ENCODE measurements at regions of chr7 and their contacts with region 1.

Region 1: DNA sequence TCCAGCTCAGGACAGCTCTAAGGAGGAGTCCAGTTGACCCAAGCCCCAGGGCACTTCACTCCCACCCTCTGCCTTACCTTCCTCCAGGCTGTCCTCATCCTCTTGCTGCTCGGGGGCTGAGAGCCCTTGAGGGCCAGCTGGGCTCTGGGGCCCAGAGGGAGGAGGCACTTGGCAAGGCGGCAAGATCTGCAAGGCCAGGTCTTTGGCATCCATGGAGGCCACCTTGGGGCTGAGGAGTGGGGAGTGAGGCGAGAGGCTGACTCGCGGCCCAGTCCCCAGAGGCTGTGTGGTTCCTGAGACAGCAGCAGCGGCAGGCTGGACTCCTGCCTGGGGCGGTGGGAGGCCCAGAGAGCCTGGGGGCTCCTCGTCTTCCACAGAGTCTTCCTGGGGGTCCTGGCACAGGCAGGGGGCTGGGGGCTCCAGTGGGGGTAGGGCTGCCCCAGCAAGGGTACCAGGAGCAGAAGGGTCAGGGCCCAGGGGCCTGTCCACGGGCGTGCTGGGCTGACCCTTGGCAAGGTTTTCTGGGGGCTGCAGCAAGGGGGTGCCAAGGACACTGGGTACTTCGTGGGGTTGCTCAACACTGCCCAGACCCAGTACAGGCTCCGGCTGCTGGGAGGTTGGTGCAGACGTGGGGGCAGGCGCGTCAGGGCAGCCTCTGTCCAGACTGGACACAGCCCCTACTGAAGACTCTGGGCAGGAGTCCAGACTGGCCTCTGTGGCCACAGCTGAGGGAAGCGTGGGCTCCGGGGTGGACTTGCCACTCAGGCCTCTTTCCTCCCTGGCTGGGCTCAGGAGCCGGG is 6.5 kb downstream of the NACAD start:
- DNase-seq: peak; percentile 44 to 74 (median 59)
- H3K4me3 ChIP-seq: no peak overlapping the region
- H3K27ac ChIP-seq: peak overlapping the region in 1 of 5 donors; percentile 22
- H3K4me1 ChIP-seq: peaks cover 0 to 12% of the 10 kb centered on the region in 2 donors
- H3K27me3 ChIP-seq: no peaks in the 10 kb centered on the region
- CTCF ChIP-seq: no peak
- POLR2A ChIP-seq: no peak

Region 2: GRCh38 chr7:45122975-45123860 is 41.0 kb after region 1 on chr7:
- intact Hi-C with region 1: loop called in 1 of 2 experiments (anchors 1 kb)
- DNase-seq: no peak
- H3K4me3 ChIP-seq: no peak overlapping the region
- H3K27ac ChIP-seq: no peak overlapping the region
- H3K4me1 ChIP-seq: no peaks in the 10 kb centered on the region
- H3K27me3 ChIP-seq: no peaks in the 10 kb centered on the region
- CTCF ChIP-seq: no peak
- POLR2A ChIP-seq: no peak

Region 3: DNA sequence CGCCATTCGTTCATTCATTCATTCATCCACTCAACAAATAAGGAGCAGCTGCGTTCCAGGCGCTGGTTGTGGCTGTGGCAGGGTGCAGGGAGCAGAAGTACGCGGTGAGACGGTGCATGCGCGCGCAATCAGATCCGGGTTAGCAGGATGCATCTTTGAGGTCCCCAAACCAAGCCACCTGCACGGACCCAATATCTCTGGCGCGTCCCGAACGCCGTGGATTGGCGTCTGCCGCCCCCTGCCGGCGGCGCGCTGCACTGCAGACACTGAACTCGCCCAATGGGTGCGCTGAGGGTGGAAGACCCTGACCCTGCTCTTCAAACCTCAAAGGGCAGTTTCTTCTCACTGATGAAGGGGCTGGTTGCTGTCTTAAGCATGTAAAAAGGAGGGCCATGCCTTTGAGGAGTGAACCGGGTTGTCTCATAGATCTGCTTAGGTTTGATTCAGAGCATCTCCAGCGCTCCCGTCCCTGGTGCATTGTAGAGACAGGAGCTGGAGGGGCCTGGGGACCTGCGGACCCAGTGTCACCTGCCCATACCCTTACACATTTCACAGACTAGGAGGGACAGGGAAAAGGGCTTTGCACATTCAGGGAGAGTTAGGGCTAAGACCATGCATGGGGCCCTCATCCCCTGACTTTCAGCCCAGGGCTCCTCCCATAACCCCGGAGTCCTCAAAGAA is 177.9 kb after region 1 on chr7:
- intact Hi-C with region 1: no loop called
- DNase-seq: peak in 6 of 7 donors; percentile 35 to 70 (median 59)
- H3K4me3 ChIP-seq: no peak overlapping the region
- H3K27ac ChIP-seq: no peak overlapping the region
- H3K4me1 ChIP-seq: no peaks in the 10 kb centered on the region
- H3K27me3 ChIP-seq: peaks cover 3% of the 10 kb centered on the region
- CTCF ChIP-seq: peak; percentile 86 to 97 (median 91)
- POLR2A ChIP-seq: no peak

Region 4: GRCh38 chr7:45407730-45408408 is 325.6 kb after region 1 on chr7:
- intact Hi-C with region 1: no loop called
- DNase-seq: no peak
- H3K4me3 ChIP-seq: no peak overlapping the region
- H3K27ac ChIP-seq: no peak overlapping the region
- H3K4me1 ChIP-seq: no peaks in the 10 kb centered on the region
- H3K27me3 ChIP-seq: no peaks in the 10 kb centered on the region
- CTCF ChIP-seq: no peak
- POLR2A ChIP-seq: no peak